Mammary epithelial cell (primary cell): ENCODE measurements at regions of chr4 and their contacts with region 1.

Region 1: DNA sequence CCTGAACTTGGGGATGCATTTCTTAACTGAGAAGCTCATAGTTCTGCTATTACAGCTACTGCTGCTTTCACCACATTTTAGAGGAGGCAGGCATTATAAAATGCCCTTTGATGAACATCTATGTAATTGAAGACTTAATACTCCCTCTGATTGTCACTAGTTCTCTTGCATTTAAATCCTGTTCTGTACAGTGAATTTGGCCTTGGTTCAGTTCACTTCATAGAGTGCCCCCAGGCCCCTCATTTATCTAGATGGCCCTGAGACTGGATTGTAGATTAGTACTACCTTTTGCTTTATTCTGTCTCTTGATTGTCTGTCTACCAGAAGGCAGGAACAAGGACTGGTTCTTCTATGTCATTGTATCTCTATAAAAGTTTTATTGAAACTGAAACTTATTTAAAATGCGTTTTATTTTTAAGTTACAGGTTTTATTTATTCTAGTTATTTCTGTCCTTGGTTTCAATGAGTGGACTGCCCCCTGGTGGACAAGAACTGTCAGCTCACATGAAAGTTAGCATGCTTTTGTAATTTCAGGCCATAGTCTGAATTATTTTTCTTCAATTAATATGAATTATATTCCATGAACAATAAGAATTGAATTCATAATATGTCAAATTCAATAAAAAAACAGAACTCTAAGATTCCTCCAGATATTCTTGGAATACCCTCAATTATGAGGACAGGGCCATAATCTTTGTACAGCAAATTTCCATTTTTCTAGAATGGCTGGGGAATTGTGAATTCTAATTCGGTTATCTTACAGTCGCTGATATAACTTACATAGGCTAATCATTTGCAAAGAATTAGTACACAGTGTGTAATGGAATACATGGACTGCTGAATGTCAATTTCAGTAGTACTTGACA is 47.2 kb upstream of the TMEM33 start:
- DNase-seq: no peak
- H3K4me3 ChIP-seq: no peak overlapping the region
- H3K27ac ChIP-seq: no peak overlapping the region
- H3K4me1 ChIP-seq: no peaks in the 10 kb centered on the region
- H3K27me3 ChIP-seq: peaks cover 9% of the 10 kb centered on the region
- CTCF ChIP-seq: peak; percentile 86 to 92

Region 2: DNA sequence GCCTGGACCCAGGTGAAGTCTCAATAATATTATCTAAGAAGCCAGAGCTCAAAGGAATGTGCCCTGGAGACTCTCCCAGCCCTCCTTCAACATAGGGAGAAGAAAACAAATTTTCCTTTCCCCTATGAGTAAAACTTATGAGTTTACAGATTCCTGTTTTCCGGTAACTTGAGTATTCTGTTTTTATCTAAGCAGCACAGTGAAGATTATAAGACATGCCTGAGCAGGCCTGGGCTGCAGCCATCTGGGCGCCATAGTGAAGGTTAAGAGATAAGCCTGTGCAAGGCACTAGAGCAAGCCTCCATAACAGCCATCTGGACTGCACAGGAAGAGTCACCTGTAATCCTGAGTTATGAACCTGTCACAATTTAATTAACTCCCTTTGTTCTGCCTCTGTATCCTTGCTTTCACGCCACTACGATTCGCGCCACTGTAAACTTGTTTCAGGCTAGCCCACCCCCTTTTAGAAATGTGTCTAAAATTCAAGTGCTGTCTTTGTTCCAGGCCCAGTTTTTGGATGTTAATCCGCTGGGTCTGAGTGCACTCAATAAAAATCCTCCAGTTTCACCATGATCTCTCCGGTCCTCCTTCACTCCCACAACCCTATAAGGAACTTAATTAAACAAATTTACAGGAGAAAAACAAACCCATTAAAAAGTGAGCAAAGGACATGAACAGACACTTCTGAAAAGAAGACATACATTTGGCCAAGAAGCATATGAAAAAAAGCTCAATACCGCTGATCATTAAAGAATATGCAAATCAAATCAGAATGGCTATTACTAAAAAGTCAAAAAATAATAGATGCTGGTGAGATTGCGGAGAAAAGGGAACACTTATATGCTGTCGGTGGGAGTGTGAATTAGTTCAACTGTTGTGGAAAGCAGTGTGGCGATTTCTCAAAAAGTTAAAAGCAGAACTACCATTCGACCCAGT is 863.2 kb before region 1 on chr4:
- CTCF ChIA-PET with region 1: no interaction called
- dilution Hi-C with region 1: no loop called
- in situ Hi-C with region 1: no loop called
- intact Hi-C with region 1: no loop called
- DNase-seq: peak; percentile 57
- H3K4me3 ChIP-seq: no peak overlapping the region
- H3K27ac ChIP-seq: no peak overlapping the region
- H3K4me1 ChIP-seq: peaks cover 8% of the 10 kb centered on the region
- H3K27me3 ChIP-seq: no peaks in the 10 kb centered on the region
- CTCF ChIP-seq: no peak

Region 3: GRCh38 chr4:41334183-41334582 is 553.9 kb before region 1 on chr4:
- CTCF ChIA-PET with region 1: no interaction called
- dilution Hi-C with region 1: no loop called
- in situ Hi-C with region 1: no loop called
- intact Hi-C with region 1: no loop called
- DNase-seq: peak; percentile 25
- H3K4me3 ChIP-seq: no peak overlapping the region
- H3K27ac ChIP-seq: no peak overlapping the region
- H3K4me1 ChIP-seq: no peaks in the 10 kb centered on the region
- H3K27me3 ChIP-seq: peaks cover 2% of the 10 kb centered on the region
- CTCF ChIP-seq: no peak

Region 4: DNA sequence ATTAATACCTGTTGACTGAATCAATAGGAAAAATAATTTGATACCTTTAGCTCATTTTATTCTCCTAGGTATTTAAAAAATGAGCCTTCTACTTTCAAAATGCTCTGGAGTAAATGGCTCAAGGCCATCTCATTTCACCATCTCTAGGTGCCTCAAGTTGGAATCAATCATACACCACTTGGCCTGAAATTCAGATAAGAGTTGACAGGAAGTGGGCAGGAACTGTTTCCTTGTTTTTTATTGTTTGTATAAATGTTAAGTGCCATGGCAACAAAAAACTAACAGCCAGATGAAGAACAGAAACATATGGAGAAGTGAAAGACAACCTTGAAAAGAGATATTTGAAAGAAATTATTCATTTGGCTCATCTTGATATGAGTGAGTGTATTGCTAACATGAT is 337.7 kb before region 1 on chr4:
- CTCF ChIA-PET with region 1: interaction called, 14 read pairs
- dilution Hi-C with region 1: no loop called
- in situ Hi-C with region 1: no loop called
- intact Hi-C with region 1: no loop called
- DNase-seq: no peak
- H3K4me3 ChIP-seq: no peak overlapping the region
- H3K27ac ChIP-seq: no peak overlapping the region
- H3K4me1 ChIP-seq: no peaks in the 10 kb centered on the region
- H3K27me3 ChIP-seq: peaks cover under 1% of the 10 kb centered on the region
- CTCF ChIP-seq: no peak

Region 5: GRCh38 chr4:41814565-41814964 is 73.5 kb before region 1 on chr4:
- CTCF ChIA-PET with region 1: no interaction called
- dilution Hi-C with region 1: loop called (anchors 5 kb)
- in situ Hi-C with region 1: no loop called
- intact Hi-C with region 1: no loop called
- DNase-seq: peak; percentile 1
- H3K4me3 ChIP-seq: no peak overlapping the region
- H3K27ac ChIP-seq: no peak overlapping the region
- H3K4me1 ChIP-seq: no peaks in the 10 kb centered on the region
- H3K27me3 ChIP-seq: peaks cover 7% of the 10 kb centered on the region
- CTCF ChIP-seq: peak in 1 of 2 donors; percentile 38

Region 6: DNA sequence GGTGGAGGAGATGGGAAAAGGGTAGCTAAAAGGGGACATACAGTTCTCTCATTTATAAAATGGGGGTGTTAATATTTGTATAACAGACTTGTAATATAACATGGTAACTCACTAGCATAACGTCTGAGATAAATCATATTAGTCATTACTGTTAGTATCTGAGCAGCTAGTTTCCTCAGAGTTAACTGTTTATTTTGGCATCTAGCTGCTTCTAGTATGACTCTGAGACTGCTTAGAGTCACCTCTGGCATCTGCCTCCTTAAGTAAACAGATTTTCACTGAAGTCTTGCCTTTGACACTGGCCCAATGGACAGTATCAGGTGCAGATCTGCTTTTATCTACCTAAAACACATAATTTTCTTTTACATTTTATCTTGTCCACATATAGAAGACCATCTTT is 160.4 kb after region 1 on chr4:
- CTCF ChIA-PET with region 1: no interaction called
- dilution Hi-C with region 1: no loop called
- in situ Hi-C with region 1: no loop called
- intact Hi-C with region 1: no loop called
- DNase-seq: peak; percentile 71
- H3K4me3 ChIP-seq: no peak overlapping the region
- H3K27ac ChIP-seq: no peak overlapping the region
- H3K4me1 ChIP-seq: no peaks in the 10 kb centered on the region
- H3K27me3 ChIP-seq: no peaks in the 10 kb centered on the region
- CTCF ChIP-seq: no peak

Region 7: GRCh38 chr4:42460043-42460442 is 572.0 kb after region 1 on chr4:
- CTCF ChIA-PET with region 1: no interaction called
- dilution Hi-C with region 1: no loop called
- in situ Hi-C with region 1: no loop called
- intact Hi-C with region 1: no loop called
- DNase-seq: no peak
- H3K4me3 ChIP-seq: no peak overlapping the region
- H3K27ac ChIP-seq: no peak overlapping the region
- H3K4me1 ChIP-seq: no peaks in the 10 kb centered on the region
- H3K27me3 ChIP-seq: no peaks in the 10 kb centered on the region
- CTCF ChIP-seq: no peak